ENCODE measurements at regions of chr7 and their contacts with region 1.

Region 1: GRCh38 chr7:47905096-47905920 is 43.0 kb downstream of the PKD1L1 start:
- DNase-seq: peak in 1 of 2 donors; percentile 72
- H3K4me3 ChIP-seq: no peak overlapping the region
- CTCF ChIP-seq: no peak
- POLR2A ChIP-seq: no peak

Region 2: GRCh38 chr7:46301677-46302076 is 1603.6 kb before region 1 on chr7:
- intact Hi-C with region 1: loop called (anchors 5 kb)
- DNase-seq: no peak
- H3K4me3 ChIP-seq: no peak overlapping the region
- CTCF ChIP-seq: no peak
- POLR2A ChIP-seq: no peak